Activated CD4-positive, alpha-beta T cell treated with anti-CD3 and anti-CD28 coated beads, Interleukin-2, amount 10 ng/mL, durations not matched to agents 24 days and 14 days (primary cell): ENCODE measurements at regions of chr5 and their contacts with region 1.

Region 1: DNA sequence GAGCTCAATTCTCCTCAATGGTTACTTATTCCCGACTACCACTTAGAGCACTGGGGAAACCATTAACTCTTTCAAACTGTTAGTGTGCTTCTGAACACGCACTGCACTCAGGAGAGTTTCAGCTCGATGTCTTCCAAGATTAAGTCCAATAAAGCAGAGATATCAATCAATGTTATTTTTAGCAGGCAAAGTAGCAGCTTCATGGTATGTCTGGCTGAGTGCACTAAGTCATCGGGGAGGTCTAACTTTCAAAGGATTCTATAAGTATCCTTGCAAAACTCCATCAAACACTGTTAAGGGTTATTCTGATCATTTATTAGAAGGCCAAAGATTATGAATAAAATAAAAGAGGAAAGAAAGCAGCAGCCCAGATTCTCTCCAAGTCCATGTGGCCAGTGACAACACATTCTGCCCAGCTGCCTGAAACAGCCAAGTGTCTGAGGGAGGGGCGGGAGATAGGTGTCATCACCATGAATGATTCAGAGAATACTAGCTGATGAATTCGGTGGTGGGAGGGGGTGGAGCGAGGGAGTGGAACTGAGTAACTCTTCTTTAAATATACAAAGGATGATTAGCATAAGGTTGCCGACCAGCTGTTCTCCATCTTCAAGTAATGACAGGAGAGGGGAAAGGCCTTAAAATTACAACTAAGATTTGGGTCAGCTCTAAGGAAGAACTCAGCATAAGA is 21.3 kb downstream of the NREP start:
- DNase-seq: no peak
- H3K4me3 Mint-ChIP-seq: no peak overlapping the region
- H3K27ac Mint-ChIP-seq: peak overlapping the region; percentile 48
- H3K4me1 Mint-ChIP-seq: peaks cover 38% of the 10 kb centered on the region
- H3K27me3 Mint-ChIP-seq: no peaks in the 10 kb centered on the region

Region 2: GRCh38 chr5:112737463-112738190 is 1001.9 kb after region 1 on chr5 and contains the start of gene APC:
- intact Hi-C with region 1: loop called (anchors 10 kb)
- DNase-seq: peak; percentile 93
- H3K4me3 Mint-ChIP-seq: peak within 1 kb of the TSS; percentile 92
- H3K27ac Mint-ChIP-seq: peak within 1 kb of the TSS; percentile 80
- H3K4me1 Mint-ChIP-seq: peaks cover 11% of the 10 kb centered on the region
- H3K27me3 Mint-ChIP-seq: peaks cover 2% of the 10 kb centered on the region
- total RNA-seq, gene APC: 19.1 and 20.4 TPM in 2 replicates